Activated naive CD4-positive, alpha-beta T cell treated with anti-CD3 and anti-CD28 coated beads for 36 hours (primary cell): ENCODE measurements at regions of chr2 and their contacts with region 1.

Region 1: DNA sequence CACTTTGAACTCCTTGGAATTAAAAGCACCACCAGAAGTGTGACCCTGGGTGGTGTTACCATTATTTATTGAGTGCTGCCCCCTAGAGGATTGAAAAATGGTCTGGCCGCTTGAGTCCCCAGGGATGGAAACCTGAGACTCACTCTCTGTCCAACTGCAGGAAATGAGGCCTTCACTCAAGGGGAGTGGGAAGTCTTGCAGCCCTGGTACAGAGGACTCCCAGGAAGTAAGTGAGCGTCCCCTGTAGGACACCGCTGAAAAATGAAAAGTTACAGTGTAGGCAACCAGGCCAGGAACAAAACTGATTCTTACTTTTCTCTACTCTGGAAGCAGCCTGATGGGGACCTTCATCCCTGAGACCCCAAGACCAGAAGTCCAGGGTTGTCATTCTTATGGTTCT is 2.2 kb upstream of the NRP2 start:
- DNase-seq: peak; percentile 73
- H3K4me3 Mint-ChIP-seq: no peak overlapping the region
- H3K27ac Mint-ChIP-seq: no peak overlapping the region
- H3K4me1 Mint-ChIP-seq: peaks cover 19% of the 10 kb centered on the region
- H3K27me3 Mint-ChIP-seq: peaks cover 36% of the 10 kb centered on the region

Region 2: GRCh38 chr2:204260162-204260877 is 1419.7 kb before region 1 on chr2:
- CTCF ChIA-PET with region 1: no interaction called
- intact Hi-C with region 1: loop called (anchors 5 kb)
- DNase-seq: peak; percentile 68
- H3K4me3 Mint-ChIP-seq: no peak overlapping the region
- H3K27ac Mint-ChIP-seq: no peak overlapping the region
- H3K4me1 Mint-ChIP-seq: no peaks in the 10 kb centered on the region
- H3K27me3 Mint-ChIP-seq: peaks cover 16% of the 10 kb centered on the region

Region 3: DNA sequence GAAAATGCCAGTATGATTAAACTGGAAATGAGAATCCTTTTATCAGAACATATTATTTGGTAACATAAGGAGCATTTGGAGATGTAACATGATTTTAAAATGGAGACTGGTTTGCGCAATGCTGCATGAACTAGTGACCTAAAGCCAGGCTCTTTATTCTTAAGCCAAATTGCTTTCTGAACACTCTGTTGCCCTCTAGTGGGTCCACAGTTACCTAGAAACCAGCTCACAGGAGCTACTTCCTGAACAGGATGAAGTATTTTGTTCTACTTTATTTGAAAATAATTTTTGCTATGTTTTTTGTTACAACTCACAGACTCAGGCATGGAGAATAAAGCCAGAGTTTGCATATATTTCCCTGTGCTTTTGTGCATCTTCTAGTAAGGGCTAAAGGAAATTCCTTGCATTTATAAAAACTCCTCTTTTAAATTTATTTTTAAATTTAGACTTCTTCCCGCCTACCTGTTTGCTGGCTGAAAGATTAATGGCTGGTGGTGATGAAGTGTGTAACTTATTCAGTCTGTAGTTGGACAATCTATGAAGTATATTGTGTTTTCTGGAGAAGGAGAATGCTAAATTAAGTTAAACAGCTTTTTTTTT is 988.1 kb before region 1 on chr2:
- CTCF ChIA-PET with region 1: no interaction called
- intact Hi-C with region 1: loop called (anchors 2 kb)
- DNase-seq: peak; percentile 63
- H3K4me3 Mint-ChIP-seq: no peak overlapping the region
- H3K27ac Mint-ChIP-seq: no peak overlapping the region
- H3K4me1 Mint-ChIP-seq: peaks cover 7% of the 10 kb centered on the region
- H3K27me3 Mint-ChIP-seq: no peaks in the 10 kb centered on the region

Region 4: GRCh38 chr2:205077159-205077558 is 602.9 kb before region 1 on chr2:
- CTCF ChIA-PET with region 1: no interaction called
- intact Hi-C with region 1: loop called (anchors 5 kb)
- DNase-seq: peak; percentile 9
- H3K4me3 Mint-ChIP-seq: peak overlapping the region; percentile 46
- H3K27ac Mint-ChIP-seq: peak overlapping the region; percentile 50
- H3K4me1 Mint-ChIP-seq: peaks cover 53% of the 10 kb centered on the region
- H3K27me3 Mint-ChIP-seq: no peaks in the 10 kb centered on the region

Region 5: DNA sequence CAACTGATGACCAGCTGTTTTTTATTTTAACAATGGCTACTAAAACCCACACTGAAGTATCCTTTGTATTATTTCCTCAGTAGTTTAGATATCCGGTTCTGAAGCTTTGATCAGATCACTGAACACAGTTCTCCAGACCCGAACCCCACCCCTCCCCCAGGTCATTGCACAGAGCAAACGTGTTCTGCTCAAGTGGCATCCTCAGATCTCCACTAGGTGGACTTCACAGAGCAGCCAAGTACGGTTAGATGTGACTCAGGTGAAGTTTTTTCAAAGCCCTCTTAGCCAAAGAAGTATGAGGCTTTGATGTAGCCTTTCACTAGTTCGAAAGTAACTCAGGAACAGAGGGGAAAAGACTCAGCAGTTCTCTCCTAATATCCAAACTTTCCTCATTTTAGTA is 140.5 kb before region 1 on chr2:
- CTCF ChIA-PET with region 1: no interaction called
- intact Hi-C with region 1: loop called (anchors 5 kb)
- DNase-seq: no peak
- H3K4me3 Mint-ChIP-seq: no peak overlapping the region
- H3K27ac Mint-ChIP-seq: no peak overlapping the region
- H3K4me1 Mint-ChIP-seq: peaks cover 26% of the 10 kb centered on the region
- H3K27me3 Mint-ChIP-seq: no peaks in the 10 kb centered on the region

Region 6: DNA sequence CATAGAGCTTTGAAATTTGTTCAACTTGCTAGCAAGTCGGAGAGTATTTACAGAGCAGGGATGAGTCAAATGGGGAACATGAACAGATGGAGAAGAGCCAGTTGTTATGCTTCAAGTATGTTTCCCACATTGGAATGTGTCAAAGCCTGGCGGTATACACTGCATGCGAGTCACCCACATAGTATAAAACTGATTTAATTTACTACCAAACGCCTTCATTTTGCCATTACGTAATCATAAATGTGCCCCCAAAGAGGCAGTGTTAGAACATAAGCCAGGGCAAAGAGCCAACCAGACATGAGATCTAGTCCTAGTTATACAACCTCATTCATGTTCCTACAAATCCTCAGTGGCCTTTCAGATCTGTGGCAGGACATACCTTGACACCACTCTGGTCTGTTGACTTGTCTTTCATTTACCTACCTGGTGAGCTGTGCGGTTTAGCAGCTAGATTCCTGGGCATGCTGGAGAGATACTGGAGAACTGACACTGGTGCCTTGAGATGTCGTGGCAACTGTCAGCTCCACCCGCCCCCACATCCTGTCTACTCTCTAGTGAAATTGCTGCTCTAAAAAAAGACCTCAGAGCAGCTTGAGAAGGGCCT is 19.4 kb before region 1 on chr2:
- CTCF ChIA-PET with region 1: interaction called, 10 read pairs
- intact Hi-C with region 1: no loop called
- DNase-seq: peak; percentile 75
- H3K4me3 Mint-ChIP-seq: peak overlapping the region; percentile 5
- H3K27ac Mint-ChIP-seq: no peak overlapping the region
- H3K4me1 Mint-ChIP-seq: peaks cover 18% of the 10 kb centered on the region
- H3K27me3 Mint-ChIP-seq: no peaks in the 10 kb centered on the region

Region 7: GRCh38 chr2:205827809-205828365 is 147.8 kb after region 1 on chr2:
- CTCF ChIA-PET with region 1: no interaction called
- intact Hi-C with region 1: no loop called
- DNase-seq: no peak
- H3K4me3 Mint-ChIP-seq: no peak overlapping the region
- H3K27ac Mint-ChIP-seq: no peak overlapping the region
- H3K4me1 Mint-ChIP-seq: no peaks in the 10 kb centered on the region
- H3K27me3 Mint-ChIP-seq: peaks cover 15% of the 10 kb centered on the region

Region 8: DNA sequence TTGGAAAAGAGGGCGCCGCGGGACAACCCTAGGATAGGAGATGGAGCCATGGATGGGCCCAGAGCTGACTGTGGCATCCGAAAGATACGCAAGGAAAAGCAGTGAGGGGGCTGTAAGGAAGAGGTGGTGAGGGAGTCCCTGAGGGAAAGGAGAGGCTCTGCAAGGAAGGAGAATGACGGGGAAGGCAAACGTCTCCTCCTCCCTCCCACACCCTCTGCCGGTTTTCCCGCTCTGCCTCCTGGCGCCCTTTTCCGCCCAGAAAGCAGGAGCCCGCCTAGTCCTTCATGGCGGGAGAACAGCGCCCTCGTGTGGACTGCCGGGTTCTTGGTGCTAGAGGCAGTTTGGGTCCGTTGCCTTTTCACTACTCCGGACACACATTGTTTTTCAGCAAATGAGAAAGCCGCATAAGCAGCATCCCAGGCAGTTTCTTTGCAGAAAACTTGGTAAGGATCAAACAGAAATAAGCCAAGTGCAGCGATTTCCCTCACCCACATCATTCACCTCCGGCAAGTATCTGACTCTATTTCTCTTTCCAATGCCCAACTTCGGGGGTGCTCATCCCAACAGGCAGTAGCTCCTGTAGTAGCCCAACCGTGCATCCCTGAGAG is 205.5 kb after region 1 on chr2:
- CTCF ChIA-PET with region 1: no interaction called
- intact Hi-C with region 1: loop called (anchors 10 kb)
- DNase-seq: peak; percentile 86
- H3K4me3 Mint-ChIP-seq: no peak overlapping the region
- H3K27ac Mint-ChIP-seq: no peak overlapping the region
- H3K4me1 Mint-ChIP-seq: no peaks in the 10 kb centered on the region
- H3K27me3 Mint-ChIP-seq: peaks cover 16% of the 10 kb centered on the region